GM12878 (cell line): ENCODE measurements at regions of chr6 and their contacts with region 1.

Region 1: GRCh38 chr6:20564269-20564668 is 30.0 kb downstream of the CDKAL1 start:
- DNase-seq: no peak
- ATAC-seq: peak; percentile 39; the same call in 2 of the 3 replicates
- H3K4me3 ChIP-seq: no peak overlapping the region
- H3K27ac ChIP-seq: peak overlapping the region; percentile 61
- H3K4me1 ChIP-seq: peaks cover 5% of the 10 kb centered on the region
- H3K27me3 ChIP-seq: no peaks in the 10 kb centered on the region
- CTCF ChIP-seq: peak in 2 of 3 experiments; percentile 34 to 44; a peak in 4 of 6 replicates
- EP300 ChIP-seq: no peak
- POLR2A ChIP-seq: no peak
- RAD21 ChIP-seq: peak; percentile 36; the same call in 1 of the 2 replicates

Region 2: DNA sequence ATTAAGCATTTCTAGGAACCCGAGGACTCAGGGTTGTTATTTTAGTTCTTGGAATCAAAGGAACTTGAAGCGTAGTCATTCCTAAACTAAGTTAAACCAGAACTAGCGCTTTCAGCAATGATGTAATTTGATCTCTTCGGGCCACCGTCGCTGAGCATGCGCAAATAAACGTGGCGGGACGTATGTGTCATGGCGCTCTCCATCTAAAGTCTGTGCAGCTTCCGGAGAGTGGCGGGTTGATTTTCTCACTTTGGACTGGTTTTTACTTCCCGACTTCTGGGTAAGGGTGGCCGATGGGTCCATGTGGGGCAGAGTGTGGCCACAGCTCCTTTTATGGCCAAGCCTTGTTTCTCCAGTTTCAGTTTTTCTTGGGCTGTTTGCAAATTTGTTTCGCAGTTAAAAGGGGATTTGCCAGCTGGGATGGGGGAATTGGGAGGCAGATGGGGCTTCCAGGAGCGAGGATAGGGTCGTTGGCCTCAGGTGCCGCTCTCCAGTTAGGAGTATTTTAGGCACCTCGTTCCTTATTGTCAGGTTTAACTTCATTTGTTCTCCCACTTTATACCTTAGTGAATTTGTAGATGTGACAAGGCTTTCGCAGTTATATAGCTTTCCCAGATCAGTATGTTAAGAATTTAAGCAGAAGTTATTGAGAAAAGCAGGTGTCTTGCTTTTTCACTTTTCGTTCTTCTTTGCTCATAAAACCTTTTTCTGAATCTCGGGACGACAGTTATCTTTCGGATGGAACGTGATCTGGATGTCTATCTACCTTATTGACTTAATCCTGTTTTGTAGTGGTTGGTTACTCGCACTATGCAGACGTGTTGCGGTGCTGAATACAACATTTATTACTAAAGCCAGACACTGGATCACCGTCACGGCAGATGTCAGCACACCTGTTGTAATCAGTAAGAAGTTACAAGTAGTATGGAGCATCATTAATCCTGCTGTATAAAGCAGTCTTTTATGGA is 29.7 kb before region 1 on chr6 and contains the start of gene CDKAL1:
- CTCF ChIA-PET with region 1: interaction called, 8 read pairs
- POLR2A ChIA-PET with region 1: no interaction called
- RAD21 ChIA-PET with region 1: interaction called, 10 read pairs
- SMC1A ChIA-PET with region 1: interaction called, 5 read pairs
- in situ Hi-C with region 1: no loop called
- intact Hi-C with region 1: no loop called
- DNase-seq: peak; percentile 91
- ATAC-seq: peak; percentile 89
- H3K4me3 ChIP-seq: peak within 1 kb of the TSS; percentile 93
- H3K27ac ChIP-seq: peak within 1 kb of the TSS; percentile 89
- H3K4me1 ChIP-seq: peaks cover 6% of the 10 kb centered on the region; the same call in 1 of the 2 replicates
- H3K27me3 ChIP-seq: no peaks in the 10 kb centered on the region
- CTCF ChIP-seq: no peak
- EP300 ChIP-seq: no peak
- POLR2A ChIP-seq: peak; percentile 87
- RAD21 ChIP-seq: no peak
- polyA plus RNA-seq, gene CDKAL1: 10.7 to 10.9 TPM

Region 3: DNA sequence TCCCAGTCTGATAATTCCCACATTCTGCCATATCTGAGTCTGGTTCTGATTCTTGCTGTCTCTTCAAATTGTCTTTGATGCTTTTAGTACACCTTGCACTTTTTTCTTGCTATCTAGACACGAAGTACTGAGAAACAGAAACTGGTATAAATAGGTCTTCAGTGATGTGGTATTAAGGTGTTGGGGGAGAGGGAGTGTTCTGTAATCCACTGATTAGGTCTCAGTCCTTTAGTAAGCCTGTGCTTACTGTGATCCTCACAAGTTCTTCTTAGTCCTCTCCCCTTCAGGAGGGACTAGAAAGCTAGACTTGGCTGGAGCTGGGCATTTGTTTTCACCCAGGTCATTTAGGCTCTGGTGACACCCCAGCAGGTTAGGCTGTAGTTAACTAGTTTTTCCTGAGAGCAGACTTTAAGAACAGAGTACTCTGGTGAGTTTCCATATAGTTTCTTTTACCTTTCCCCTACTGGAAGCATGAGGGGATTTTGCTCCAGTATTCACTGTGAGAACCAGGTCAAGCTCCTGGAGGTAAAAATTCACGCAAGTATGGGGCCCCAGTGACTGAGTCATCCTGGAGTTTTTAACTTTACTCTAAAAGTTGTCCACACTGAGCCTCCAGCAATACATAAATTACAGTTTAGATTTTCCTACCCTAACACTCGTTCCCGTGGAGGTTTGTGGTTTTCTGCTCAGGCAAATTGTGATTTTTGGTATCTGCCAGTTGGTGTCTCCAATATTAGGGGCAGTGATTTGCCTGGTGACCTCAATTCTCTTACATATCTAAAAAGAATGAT is 124.6 kb after region 1 on chr6:
- CTCF ChIA-PET with region 1: no interaction called
- POLR2A ChIA-PET with region 1: no interaction called
- RAD21 ChIA-PET with region 1: interaction called, 3 read pairs
- SMC1A ChIA-PET with region 1: interaction called, 13 read pairs
- in situ Hi-C with region 1: no loop called
- intact Hi-C with region 1: no loop called
- DNase-seq: peak; percentile 59
- ATAC-seq: peak; percentile 96
- H3K4me3 ChIP-seq: peak overlapping the region; percentile 38; the same call in 1 of the 2 replicates
- H3K27ac ChIP-seq: peak overlapping the region; percentile 72
- H3K4me1 ChIP-seq: peaks cover 13% of the 10 kb centered on the region
- H3K27me3 ChIP-seq: no peaks in the 10 kb centered on the region
- CTCF ChIP-seq: no peak
- EP300 ChIP-seq: no peak
- POLR2A ChIP-seq: no peak
- RAD21 ChIP-seq: peak; percentile 16; the same call in 1 of the 2 replicates

Region 4: DNA sequence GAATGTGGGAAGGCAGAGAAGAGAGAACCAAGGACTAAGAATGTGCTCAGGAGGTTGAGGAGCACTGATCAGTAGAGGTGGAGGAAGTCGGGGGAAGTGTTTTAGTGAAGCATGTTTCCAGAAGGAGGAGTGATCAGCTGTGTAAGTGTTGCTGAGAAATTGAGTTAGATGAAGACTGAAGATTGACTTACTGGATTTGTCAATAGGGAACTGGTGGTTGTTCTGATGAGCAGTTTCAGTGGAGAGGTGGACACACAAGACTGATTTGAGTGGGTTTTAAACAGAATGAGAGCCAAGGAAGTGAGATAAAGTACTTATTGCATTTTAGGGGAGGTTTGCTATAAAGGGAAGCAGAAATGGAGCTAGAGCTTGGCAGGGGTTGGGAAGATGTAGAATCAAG is 152.6 kb after region 1 on chr6:
- CTCF ChIA-PET with region 1: interaction called, 3 read pairs
- POLR2A ChIA-PET with region 1: no interaction called
- RAD21 ChIA-PET with region 1: interaction called, 13 read pairs
- SMC1A ChIA-PET with region 1: interaction called, 13 read pairs
- in situ Hi-C with region 1: no loop called
- intact Hi-C with region 1: no loop called
- DNase-seq: peak; percentile 54
- ATAC-seq: peak; percentile 84
- H3K4me3 ChIP-seq: no peak overlapping the region
- H3K27ac ChIP-seq: no peak overlapping the region
- H3K4me1 ChIP-seq: peaks cover 23% of the 10 kb centered on the region
- H3K27me3 ChIP-seq: no peaks in the 10 kb centered on the region
- CTCF ChIP-seq: no peak
- EP300 ChIP-seq: peak in 1 of 2 experiments; percentile 63; a peak in 1 of 4 replicates
- POLR2A ChIP-seq: no peak
- RAD21 ChIP-seq: peak; percentile 35; the same call in 1 of the 2 replicates

Region 5: DNA sequence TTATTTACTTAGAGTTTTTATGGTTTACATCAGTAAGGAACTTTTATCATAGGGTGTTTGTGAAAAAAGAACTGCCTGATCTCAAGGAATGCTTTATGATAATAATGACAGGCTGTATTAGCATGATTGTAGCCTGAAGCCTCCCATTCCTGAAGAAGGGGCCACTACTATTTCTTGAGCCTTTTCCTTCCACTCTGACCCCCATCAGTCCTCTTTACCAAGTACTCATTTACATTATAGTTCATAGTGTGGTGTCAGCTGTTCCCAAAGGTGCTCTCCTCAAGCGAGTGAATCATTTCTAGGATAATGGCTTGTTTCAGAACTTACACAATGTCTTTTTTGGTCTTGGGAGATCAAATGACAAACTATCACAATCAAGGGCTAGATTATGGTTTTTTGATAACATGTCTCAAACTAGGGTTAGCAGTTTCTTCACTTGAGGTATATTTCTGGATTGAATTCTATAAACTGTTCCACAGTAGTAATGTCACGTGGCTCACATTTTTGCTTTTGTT is 253.6 kb after region 1 on chr6:
- CTCF ChIA-PET with region 1: no interaction called
- POLR2A ChIA-PET with region 1: no interaction called
- RAD21 ChIA-PET with region 1: no interaction called
- SMC1A ChIA-PET with region 1: no interaction called
- in situ Hi-C with region 1: no loop called
- intact Hi-C with region 1: no loop called
- DNase-seq: no peak
- ATAC-seq: no peak
- H3K4me3 ChIP-seq: no peak overlapping the region
- H3K27ac ChIP-seq: no peak overlapping the region
- H3K4me1 ChIP-seq: no peaks in the 10 kb centered on the region
- H3K27me3 ChIP-seq: no peaks in the 10 kb centered on the region
- CTCF ChIP-seq: no peak
- EP300 ChIP-seq: no peak
- POLR2A ChIP-seq: no peak
- RAD21 ChIP-seq: no peak

Region 6: GRCh38 chr6:21003780-21004541 is 439.7 kb after region 1 on chr6:
- CTCF ChIA-PET with region 1: no interaction called
- POLR2A ChIA-PET with region 1: no interaction called
- RAD21 ChIA-PET with region 1: no interaction called
- SMC1A ChIA-PET with region 1: no interaction called
- in situ Hi-C with region 1: no loop called
- intact Hi-C with region 1: loop called (anchors 10 kb)
- DNase-seq: peak; percentile 72
- ATAC-seq: peak; percentile 89
- H3K4me3 ChIP-seq: peak overlapping the region; percentile 32; the same call in 1 of the 2 replicates
- H3K27ac ChIP-seq: peak overlapping the region; percentile 83
- H3K4me1 ChIP-seq: peaks cover 20% of the 10 kb centered on the region
- H3K27me3 ChIP-seq: no peaks in the 10 kb centered on the region
- CTCF ChIP-seq: no peak
- EP300 ChIP-seq: peak in 1 of 2 experiments; percentile 72; a peak in 3 of 4 replicates
- POLR2A ChIP-seq: no peak
- RAD21 ChIP-seq: no peak

Region 7: DNA sequence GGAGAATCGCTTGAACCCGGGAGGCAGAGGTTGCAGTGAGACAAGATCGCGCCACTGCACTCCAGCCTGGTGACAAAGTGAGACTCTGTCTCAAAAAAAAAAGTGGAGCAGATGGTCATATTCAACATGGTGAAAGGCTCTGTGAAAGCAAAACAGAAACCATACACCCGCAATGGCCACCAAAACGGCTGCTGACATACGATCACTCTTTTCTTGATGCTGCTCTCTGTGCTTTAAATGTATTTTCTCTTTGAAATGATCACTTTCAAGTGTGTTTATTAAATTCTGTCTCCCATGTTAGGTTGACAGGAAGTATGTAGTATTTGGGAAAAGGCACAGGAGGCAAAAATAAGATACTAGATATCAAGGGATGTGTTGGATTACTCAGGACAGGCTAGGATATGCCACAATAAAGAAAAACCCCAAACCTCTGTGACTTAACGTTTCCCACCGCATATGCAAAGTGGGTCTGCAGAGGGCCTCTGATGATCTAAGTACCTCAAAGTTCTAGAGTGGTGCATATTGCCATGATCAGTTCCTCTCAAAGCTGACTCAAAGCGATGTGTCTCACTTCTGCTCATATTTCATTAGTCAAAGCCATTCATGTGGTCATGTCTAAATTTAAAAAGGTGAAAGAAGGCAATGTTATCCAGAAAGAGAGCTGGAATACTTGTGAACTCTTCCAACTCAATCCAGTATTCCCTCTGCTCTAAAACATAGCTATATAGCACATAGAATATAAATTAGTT is 874.1 kb after region 1 on chr6:
- CTCF ChIA-PET with region 1: no interaction called
- POLR2A ChIA-PET with region 1: no interaction called
- RAD21 ChIA-PET with region 1: no interaction called
- SMC1A ChIA-PET with region 1: no interaction called
- in situ Hi-C with region 1: loop called (anchors 25 kb)
- intact Hi-C with region 1: no loop called
- DNase-seq: peak; percentile 97
- ATAC-seq: peak; percentile 97
- H3K4me3 ChIP-seq: peak overlapping the region; percentile 60; the same call in 1 of the 2 replicates
- H3K27ac ChIP-seq: peak overlapping the region; percentile 89
- H3K4me1 ChIP-seq: peaks cover 17% of the 10 kb centered on the region
- H3K27me3 ChIP-seq: no peaks in the 10 kb centered on the region
- CTCF ChIP-seq: no peak
- EP300 ChIP-seq: peak; percentile 93 to 99
- POLR2A ChIP-seq: no peak
- RAD21 ChIP-seq: no peak